ENCODE measurements at regions of chr12 and their contacts with region 1.

Region 1: GRCh38 chr12:3998968-3999826 is 126.0 kb upstream of the PARP11 start:
- DNase-seq: peak; percentile 52
- H3K4me3 ChIP-seq: no peak overlapping the region
- H3K27ac ChIP-seq: peak overlapping the region in 3 of 4 donors; percentile 28 to 41 (median 31)
- H3K4me1 ChIP-seq: no peaks in the 10 kb centered on the region
- H3K27me3 ChIP-seq: no peaks in the 10 kb centered on the region
- CTCF ChIP-seq: no peak
- EP300 ChIP-seq: no peak
- POLR2A ChIP-seq: no peak

Region 2: DNA sequence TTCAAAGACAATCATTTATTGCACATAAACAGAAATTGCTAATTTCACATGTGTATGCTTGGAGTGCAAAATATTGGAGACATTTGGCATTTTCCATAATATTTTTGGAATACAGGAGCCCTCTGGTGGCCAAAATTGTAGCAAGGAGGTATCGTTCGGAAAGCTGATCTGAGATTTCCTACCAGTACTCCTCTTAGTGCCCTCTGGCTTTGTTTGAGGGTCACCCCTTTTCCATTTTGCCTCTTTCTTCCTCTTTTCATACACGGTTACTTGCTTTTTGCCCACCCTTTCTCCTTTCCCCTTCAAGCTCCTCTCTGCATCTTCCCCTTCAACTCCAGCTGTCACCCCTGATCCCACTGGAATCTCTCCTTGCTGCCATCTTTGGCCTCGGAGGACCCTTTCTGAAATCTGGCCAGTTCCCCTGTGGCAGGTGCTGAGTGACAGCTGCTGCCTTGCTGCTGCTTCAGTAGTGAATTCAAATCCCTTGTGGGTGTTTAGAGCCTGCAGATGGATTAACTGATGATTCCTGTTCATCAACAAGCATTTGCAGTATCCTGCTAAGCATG is 38.6 kb after region 1 on chr12:
- in situ Hi-C with region 1: no loop called
- intact Hi-C with region 1: loop called (anchors 5 kb)
- DNase-seq: peak; percentile 46
- H3K4me3 ChIP-seq: no peak overlapping the region
- H3K27ac ChIP-seq: peak overlapping the region; percentile 65 to 78 (median 74)
- H3K4me1 ChIP-seq: peaks cover 4 to 29% (median 17%) of the 10 kb centered on the region in 4 donors
- H3K27me3 ChIP-seq: no peaks in the 10 kb centered on the region
- CTCF ChIP-seq: peak; percentile 70 to 79 (median 72)
- EP300 ChIP-seq: no peak
- POLR2A ChIP-seq: no peak

Region 3: GRCh38 chr12:4287325-4288211 is 288.4 kb after region 1 on chr12:
- in situ Hi-C with region 1: loop called in 2 of 4 experiments (anchors 10 kb)
- intact Hi-C with region 1: no loop called
- DNase-seq: no peak
- H3K4me3 ChIP-seq: no peak overlapping the region
- H3K27ac ChIP-seq: peak overlapping the region; percentile 68 to 74 (median 69)
- H3K4me1 ChIP-seq: peaks cover 11 to 55% (median 38%) of the 10 kb centered on the region in 4 donors
- H3K27me3 ChIP-seq: no peaks in the 10 kb centered on the region
- CTCF ChIP-seq: no peak
- EP300 ChIP-seq: no peak
- POLR2A ChIP-seq: no peak